ENCODE measurements at regions of chr2 and their contacts with region 1.

Region 1: DNA sequence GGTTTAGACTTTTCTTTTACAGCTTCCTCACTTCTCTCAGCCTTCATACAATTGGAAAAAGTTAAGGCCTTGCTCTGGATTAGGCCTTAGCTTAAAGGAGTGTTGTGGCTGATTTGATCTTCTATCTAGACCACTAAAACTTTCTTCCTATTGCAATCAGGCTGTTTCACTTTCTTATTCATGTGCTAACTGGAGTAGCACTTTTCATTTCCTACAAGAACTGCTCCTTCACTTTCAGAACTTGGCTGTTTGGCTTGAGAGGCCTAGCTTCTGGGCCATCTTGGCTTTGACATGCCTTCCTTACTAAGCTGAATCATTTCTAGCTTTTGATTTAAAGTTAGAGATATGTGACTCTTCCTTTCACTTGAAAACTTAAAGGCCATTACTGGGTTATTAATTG is 114.3 kb downstream of the ARHGEF4 start:
- DNase-seq: no peak
- ATAC-seq: no peak
- H3K4me3 ChIP-seq: no peak overlapping the region
- H3K27ac ChIP-seq: no peak overlapping the region
- H3K4me1 ChIP-seq: no peaks in the 10 kb centered on the region
- H3K27me3 ChIP-seq: no peaks in the 10 kb centered on the region
- CTCF ChIP-seq: no peak

Region 2: GRCh38 chr2:130768191-130768855 is 182.7 kb before region 1 on chr2:
- CTCF ChIA-PET with region 1: no interaction called
- POLR2A ChIA-PET with region 1: no interaction called
- intact Hi-C with region 1: no loop called
- DNase-seq: no peak
- ATAC-seq: peak; percentile 37; the same call in 1 of the 2 replicates
- H3K4me3 ChIP-seq: no peak overlapping the region
- H3K27ac ChIP-seq: no peak overlapping the region
- H3K4me1 ChIP-seq: no peaks in the 10 kb centered on the region
- H3K27me3 ChIP-seq: peaks cover 42% of the 10 kb centered on the region
- CTCF ChIP-seq: peak; percentile 41

Region 3: DNA sequence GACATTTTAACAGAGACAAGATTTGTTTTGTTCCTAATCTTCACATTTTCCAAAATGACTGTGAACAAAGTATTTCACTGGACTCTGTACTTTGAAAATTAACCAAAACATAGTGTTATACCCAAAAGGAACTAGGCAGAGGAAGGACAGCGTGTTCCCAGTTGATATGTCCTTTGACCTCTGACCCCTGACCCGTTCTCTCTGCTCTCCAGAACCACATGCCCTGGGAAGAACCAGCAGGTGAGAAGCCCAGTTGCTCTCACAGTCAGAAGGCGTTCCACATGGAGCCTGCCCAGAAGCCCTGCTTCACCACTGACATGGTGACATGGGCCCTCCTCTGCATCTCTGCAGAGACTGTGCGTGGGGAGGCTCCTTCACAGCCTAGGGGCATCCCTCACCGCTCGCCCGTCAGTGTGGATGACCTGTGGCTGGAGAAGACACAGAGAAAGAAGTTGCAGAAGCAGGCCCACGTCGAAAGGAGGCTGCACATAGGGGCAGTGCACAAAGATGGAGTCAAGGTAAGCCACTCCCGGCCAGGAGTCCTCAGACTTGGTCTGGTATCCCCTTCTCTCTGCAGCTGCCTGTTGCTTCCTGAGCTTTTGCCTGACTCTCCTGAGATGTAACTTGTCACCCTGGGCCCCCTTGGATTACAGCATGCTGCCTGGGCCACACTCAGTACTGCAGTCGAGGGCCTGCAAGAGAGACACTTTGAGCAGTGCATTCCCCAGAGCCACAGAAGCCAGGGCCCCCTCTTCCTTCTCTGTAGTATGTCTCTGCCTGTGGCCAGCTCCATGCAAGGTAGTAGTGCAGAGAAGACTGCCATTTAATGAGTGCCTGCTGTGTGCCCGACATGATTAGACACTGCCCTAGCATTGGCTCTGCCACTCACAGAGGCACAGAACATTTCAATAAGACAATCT is 20.0 kb before region 1 on chr2:
- CTCF ChIA-PET with region 1: no interaction called
- POLR2A ChIA-PET with region 1: no interaction called
- intact Hi-C with region 1: no loop called
- DNase-seq: no peak
- ATAC-seq: no peak
- H3K4me3 ChIP-seq: no peak overlapping the region
- H3K27ac ChIP-seq: no peak overlapping the region
- H3K4me1 ChIP-seq: no peaks in the 10 kb centered on the region
- H3K27me3 ChIP-seq: no peaks in the 10 kb centered on the region
- CTCF ChIP-seq: no peak

Region 4: DNA sequence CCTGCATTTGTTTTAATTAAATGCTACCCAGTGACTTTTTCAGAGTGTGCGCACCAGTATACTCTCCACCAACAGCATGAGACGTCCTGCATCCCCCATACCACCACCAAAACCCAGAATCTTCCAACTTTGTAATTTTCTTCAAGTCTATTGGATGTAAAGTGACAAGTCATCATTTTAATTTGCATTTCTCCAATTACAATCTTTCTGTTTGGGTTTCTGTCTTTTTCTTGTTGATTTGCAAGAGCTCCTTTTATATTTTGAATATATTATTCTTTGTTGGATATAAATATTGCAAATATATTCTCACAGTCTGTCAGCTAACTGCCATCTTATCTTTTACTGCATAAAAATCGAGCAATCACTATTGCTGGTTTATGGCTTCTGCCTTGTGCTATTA is 45.7 kb after region 1 on chr2:
- CTCF ChIA-PET with region 1: no interaction called
- POLR2A ChIA-PET with region 1: no interaction called
- intact Hi-C with region 1: loop called (anchors 2 kb)
- DNase-seq: no peak
- ATAC-seq: no peak
- H3K4me3 ChIP-seq: no peak overlapping the region
- H3K27ac ChIP-seq: no peak overlapping the region
- H3K4me1 ChIP-seq: no peaks in the 10 kb centered on the region
- H3K27me3 ChIP-seq: no peaks in the 10 kb centered on the region
- CTCF ChIP-seq: no peak